ENCODE measurements at regions of chr20 and their contacts with region 1.

Region 1: DNA sequence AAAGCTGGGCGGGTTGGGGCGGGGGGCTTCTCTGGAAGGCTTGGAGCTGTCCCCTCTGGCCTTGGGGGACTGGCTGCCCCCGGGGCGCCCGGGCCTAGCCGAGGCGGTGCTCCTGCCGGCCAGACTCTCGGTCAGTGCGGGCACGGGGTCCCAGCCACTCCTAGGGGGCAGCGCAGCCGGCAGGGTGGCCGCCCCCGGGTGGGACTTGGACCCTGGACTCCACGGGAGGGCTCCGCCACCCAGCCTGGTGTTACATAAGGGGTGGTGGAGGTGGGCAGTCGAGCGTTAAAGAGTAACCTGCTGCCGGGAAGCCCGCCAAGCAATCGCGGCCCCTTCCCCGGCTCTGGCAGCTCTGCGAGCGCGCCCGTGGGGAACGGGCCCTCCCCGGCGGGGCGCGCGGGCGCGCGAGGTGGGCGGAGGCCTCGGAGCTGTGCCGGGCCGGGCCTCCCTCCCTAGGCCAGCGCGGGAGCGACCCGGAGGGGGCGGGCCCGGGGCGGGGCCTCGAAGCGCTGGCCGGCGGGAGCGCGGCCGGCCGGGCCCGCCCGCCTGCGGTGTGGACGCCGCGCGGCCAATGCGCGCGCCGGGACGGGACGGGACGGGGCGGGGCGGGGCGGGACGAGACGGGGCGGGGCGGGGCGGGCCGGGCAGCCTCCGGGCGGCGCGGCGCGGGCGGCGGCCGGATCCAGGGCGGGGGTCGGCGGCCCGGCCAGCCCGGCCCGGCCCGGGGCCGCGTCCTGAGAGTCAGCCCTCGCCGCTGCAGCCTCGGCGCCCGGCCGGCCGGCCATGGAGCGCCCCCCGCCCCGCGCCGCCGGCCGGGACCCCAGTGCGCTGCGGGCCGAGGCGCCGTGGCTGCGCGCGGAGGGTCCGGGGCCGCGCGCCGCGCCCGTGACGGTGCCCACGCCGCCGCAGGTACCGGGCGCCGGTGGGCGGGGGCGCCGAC is at the start of gene SLC2A4RG:
- DNase-seq: peak; percentile 59 to 79 (median 68)
- H3K4me3 ChIP-seq: peak within 1 kb of the TSS; percentile 66
- H3K4me3 Mint-ChIP-seq: peak within 1 kb of the TSS; percentile 59 to 92 (median 76)
- H3K27ac ChIP-seq: peak within 1 kb of the TSS; percentile 38
- H3K27ac Mint-ChIP-seq: peak within 1 kb of the TSS in 3 of 8 donors; percentile 36 to 61 (median 55)
- H3K4me1 ChIP-seq: peaks cover 30% of the 10 kb centered on the region
- H3K4me1 Mint-ChIP-seq: peaks cover 10 to 29% (median 11%) of the 10 kb centered on the region in 3 donors
- H3K27me3 ChIP-seq: no peaks in the 10 kb centered on the region
- H3K27me3 Mint-ChIP-seq: peaks cover 0 to 3% of the 10 kb centered on the region in 2 donors
- total RNA-seq, gene SLC2A4RG: 37.5 to 40.6 TPM

Region 2: DNA sequence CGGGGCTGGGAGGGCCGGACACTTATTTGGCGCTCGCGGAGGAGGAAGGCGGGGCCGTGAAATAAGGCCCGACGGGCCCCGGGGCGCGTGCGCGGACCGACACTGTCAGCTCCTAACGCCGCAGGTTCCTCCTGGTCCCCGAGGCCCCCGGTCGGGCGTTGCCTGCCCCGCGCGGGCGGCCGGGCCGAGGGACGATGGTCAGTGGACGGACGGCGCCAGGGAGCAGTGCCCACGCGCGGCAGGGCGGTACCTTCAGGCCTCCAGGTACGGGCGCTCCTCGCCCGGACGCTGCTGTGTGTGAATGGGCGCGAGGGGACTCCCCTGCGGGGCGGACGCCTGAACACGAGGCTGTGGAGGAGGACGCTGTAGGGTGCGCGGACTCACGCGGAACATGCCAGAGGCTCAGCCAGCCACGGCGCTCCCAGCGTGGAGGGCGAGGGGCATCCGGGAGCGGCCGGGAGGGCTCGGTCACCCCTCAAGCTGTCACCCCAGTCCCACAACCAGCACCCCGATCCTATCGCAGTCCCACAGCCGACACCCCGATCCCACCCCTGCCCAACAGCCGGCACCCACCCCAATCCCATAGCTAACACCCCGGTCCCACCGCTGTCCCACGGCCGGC is 112.2 kb before region 1 on chr20:
- CTCF ChIA-PET with region 1: no interaction called
- POLR2A ChIA-PET with region 1: interaction called, 11 read pairs
- DNase-seq: peak; percentile 87 to 98 (median 91)
- H3K4me3 ChIP-seq: peak overlapping the region; percentile 93
- H3K4me3 Mint-ChIP-seq: peak overlapping the region; percentile 90 to 98 (median 95)
- H3K27ac ChIP-seq: peak overlapping the region; percentile 81
- H3K27ac Mint-ChIP-seq: peak overlapping the region; percentile 68 to 96 (median 86)
- H3K4me1 ChIP-seq: peaks cover 35% of the 10 kb centered on the region
- H3K4me1 Mint-ChIP-seq: peaks cover 31 to 52% (median 34%) of the 10 kb centered on the region in 3 donors
- H3K27me3 ChIP-seq: no peaks in the 10 kb centered on the region
- H3K27me3 Mint-ChIP-seq: no peaks in the 10 kb centered on the region

Region 3: DNA sequence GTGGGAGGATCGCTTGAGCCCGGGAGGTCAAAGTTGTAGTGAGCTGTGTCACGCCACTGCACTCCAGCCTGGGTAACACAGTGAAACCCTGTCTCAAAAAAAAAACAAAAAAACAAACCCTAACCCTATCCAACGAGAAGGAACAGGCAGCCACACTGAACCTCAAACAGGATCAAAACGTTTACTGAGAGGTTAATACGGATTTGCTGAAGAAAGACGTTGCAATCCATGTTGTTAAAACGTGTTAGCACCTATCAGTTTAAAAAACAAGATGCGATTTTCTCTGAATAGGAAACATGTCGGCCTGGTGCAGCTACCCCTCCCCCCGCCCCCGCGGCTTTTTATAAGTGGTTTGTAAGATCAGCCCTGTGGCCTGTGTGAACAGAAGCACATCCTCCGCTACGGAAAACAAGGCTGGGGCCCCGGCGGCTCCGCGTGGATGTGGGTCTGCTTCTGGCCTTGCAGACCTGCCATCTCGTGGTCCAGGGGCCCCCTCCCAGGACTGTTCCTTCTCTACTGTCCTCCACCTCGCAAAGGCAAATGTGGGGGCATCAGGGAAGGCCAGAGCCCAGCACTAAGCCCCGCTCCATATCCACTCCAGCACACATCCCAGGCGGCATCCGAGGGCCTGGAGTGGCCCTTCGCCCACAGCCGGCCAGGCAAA is 11.5 kb after region 1 on chr20:
- CTCF ChIA-PET with region 1: interaction called, 14 read pairs
- POLR2A ChIA-PET with region 1: interaction called, 31 read pairs
- DNase-seq: peak; percentile 39 to 77 (median 61)
- H3K4me3 ChIP-seq: peak overlapping the region; percentile 40
- H3K4me3 Mint-ChIP-seq: peak overlapping the region in 6 of 7 donors; percentile 66 to 85 (median 82)
- H3K27ac ChIP-seq: no peak overlapping the region
- H3K27ac Mint-ChIP-seq: peak overlapping the region; percentile 75 to 97 (median 88)
- H3K4me1 ChIP-seq: peaks cover 22% of the 10 kb centered on the region
- H3K4me1 Mint-ChIP-seq: peaks cover 17 to 29% (median 22%) of the 10 kb centered on the region in 3 donors
- H3K27me3 ChIP-seq: no peaks in the 10 kb centered on the region
- H3K27me3 Mint-ChIP-seq: no peaks in the 10 kb centered on the region

Measured in CD8-positive, alpha-beta memory T cell (primary cell).